Calu3 (cell line): ENCODE measurements at regions of chr12 and their contacts with region 1.

Region 1: GRCh38 chr12:5442251-5443006 is 10.5 kb downstream of the NTF3 start:
- DNase-seq: no peak
- H3K4me3 Mint-ChIP-seq: no peak overlapping the region
- H3K27ac Mint-ChIP-seq: no peak overlapping the region
- H3K4me1 Mint-ChIP-seq: no peaks in the 10 kb centered on the region
- H3K27me3 Mint-ChIP-seq: peaks cover 18% of the 10 kb centered on the region
- CTCF ChIP-seq: no peak

Region 2: GRCh38 chr12:5022465-5023061 is 419.9 kb before region 1 on chr12:
- CTCF ChIA-PET with region 1: no interaction called
- intact Hi-C with region 1: loop called (anchors 5 kb)
- DNase-seq: peak; percentile 36
- H3K4me3 Mint-ChIP-seq: no peak overlapping the region
- H3K27ac Mint-ChIP-seq: no peak overlapping the region
- H3K4me1 Mint-ChIP-seq: no peaks in the 10 kb centered on the region
- H3K27me3 Mint-ChIP-seq: peaks cover 81% of the 10 kb centered on the region
- CTCF ChIP-seq: peak; percentile 75

Region 3: DNA sequence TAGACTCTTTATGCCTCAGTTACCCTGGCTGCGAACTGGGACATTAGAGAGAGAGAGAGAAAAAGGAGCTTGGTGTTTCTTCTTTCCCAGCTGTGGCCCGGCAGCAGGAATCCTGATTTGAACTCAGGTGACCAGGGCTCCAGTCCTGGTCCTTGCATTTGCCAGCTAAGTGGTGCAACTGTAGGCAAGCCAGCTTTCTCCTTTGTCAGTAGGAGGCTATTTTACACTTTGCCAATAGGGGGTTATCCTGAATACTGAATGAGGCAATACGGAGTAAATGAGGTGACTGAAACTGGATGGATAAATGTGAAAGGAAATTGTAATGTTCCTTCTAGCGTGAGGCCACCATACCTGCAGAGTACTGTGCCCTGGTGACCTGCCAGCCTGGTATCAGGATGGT is 370.9 kb before region 1 on chr12:
- CTCF ChIA-PET with region 1: no interaction called
- intact Hi-C with region 1: no loop called
- DNase-seq: no peak
- H3K4me3 Mint-ChIP-seq: no peak overlapping the region
- H3K27ac Mint-ChIP-seq: no peak overlapping the region
- H3K4me1 Mint-ChIP-seq: no peaks in the 10 kb centered on the region
- H3K27me3 Mint-ChIP-seq: peaks cover 63% of the 10 kb centered on the region
- CTCF ChIP-seq: no peak

Region 4: DNA sequence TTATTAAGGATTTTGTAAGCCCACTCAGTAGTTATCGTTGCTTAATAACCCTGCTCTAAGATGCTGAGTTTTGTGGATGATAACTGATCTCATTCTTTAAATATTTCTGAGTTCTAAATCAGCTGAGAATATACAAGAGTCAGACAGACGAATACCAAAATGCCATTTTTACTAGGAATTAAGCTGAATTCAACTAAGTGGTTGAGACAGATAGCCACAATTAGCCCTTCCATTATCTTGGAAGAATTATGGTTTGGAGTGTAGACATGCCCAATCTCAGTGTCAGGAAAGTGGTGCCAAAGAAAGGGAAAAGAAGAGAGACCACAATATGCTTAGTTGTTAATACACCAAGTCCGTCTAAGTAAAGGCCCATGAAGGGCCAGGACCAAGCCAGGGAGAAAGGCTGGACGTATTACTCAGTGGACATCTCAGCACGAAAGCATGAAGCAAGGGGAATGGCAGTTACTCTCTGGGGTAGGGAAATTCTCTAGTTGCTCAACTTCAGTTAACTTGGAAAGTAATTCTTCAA is 340.1 kb before region 1 on chr12:
- CTCF ChIA-PET with region 1: no interaction called
- intact Hi-C with region 1: loop called (anchors 10 kb)
- DNase-seq: no peak
- H3K4me3 Mint-ChIP-seq: no peak overlapping the region
- H3K27ac Mint-ChIP-seq: no peak overlapping the region
- H3K4me1 Mint-ChIP-seq: no peaks in the 10 kb centered on the region
- H3K27me3 Mint-ChIP-seq: peaks cover 15% of the 10 kb centered on the region
- CTCF ChIP-seq: no peak

Region 5: GRCh38 chr12:5171701-5172100 is 270.7 kb before region 1 on chr12:
- CTCF ChIA-PET with region 1: no interaction called
- intact Hi-C with region 1: loop called (anchors 2 kb)
- DNase-seq: peak; percentile 36
- H3K4me3 Mint-ChIP-seq: no peak overlapping the region
- H3K27ac Mint-ChIP-seq: no peak overlapping the region
- H3K4me1 Mint-ChIP-seq: no peaks in the 10 kb centered on the region
- H3K27me3 Mint-ChIP-seq: peaks cover 32% of the 10 kb centered on the region
- CTCF ChIP-seq: peak; percentile 18